PC-9 (cell line): ENCODE measurements at regions of chr1 and their contacts with region 1.

Region 1: DNA sequence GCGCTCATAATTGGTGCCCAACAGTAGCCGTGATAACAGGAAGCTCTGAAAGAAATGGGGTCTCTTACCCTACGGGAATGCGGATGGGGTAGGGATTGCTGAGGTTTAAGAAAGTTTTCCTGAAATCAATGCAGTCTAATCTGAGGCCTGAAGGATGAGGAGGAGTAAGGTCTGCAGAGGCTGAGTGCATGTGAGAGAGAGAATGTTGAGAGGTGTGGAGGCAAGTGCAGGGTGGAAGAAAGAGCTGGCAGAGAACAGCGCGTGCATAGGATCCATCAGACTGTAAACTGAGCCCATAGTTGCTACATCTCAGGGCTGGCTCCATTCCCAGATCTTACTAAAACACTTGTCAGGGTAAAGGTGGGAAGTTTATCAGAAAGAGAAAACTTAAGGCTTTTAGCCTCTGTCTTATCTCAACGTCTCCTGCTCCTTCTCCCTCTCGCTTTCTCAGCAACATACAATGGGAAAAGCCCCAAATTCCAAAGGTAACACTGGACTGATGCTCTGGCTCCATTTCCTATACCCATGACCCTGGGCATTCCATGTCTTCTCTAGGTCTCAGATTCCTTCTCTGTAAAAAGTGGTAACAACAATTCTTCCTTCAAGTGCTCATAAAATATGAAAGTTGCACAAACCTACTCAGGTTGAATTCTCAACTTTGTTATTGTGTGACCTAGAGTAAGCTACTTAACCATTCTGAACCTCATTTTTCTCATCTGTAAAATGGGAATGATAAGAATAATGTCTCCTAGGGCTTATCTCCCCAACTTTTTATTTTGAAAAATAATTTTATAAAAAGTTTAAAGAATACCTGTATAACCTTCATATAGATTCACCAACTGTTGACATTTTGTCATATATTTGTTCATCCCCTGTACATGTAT is 75.2 kb downstream of the SH3GLB1 start:
- DNase-seq: peak; percentile 38 to 60
- H3K4me3 ChIP-seq: no peak overlapping the region
- H3K27ac ChIP-seq: no peak overlapping the region
- H3K4me1 ChIP-seq: peaks cover 46% of the 10 kb centered on the region
- H3K27me3 ChIP-seq: no peaks in the 10 kb centered on the region
- CTCF ChIP-seq: no peak

Region 2: GRCh38 chr1:84959294-84959693 is 1820.3 kb before region 1 on chr1:
- CTCF ChIA-PET with region 1: no interaction called
- POLR2A ChIA-PET with region 1: interaction called, 13 read pairs
- intact Hi-C with region 1: no loop called
- DNase-seq: no peak
- H3K4me3 ChIP-seq: no peak overlapping the region
- H3K27ac ChIP-seq: no peak overlapping the region
- H3K4me1 ChIP-seq: peaks cover 13% of the 10 kb centered on the region
- H3K27me3 ChIP-seq: no peaks in the 10 kb centered on the region
- CTCF ChIP-seq: no peak

Region 3: GRCh38 chr1:86914998-86915736 is 135.6 kb after region 1 on chr1:
- CTCF ChIA-PET with region 1: no interaction called
- POLR2A ChIA-PET with region 1: interaction called, 25 read pairs
- intact Hi-C with region 1: no loop called
- DNase-seq: peak; percentile 22 to 58
- H3K4me3 ChIP-seq: peak overlapping the region; percentile 98
- H3K27ac ChIP-seq: no peak overlapping the region
- H3K4me1 ChIP-seq: peaks cover 22% of the 10 kb centered on the region
- H3K27me3 ChIP-seq: no peaks in the 10 kb centered on the region
- CTCF ChIP-seq: no peak